CD4-positive, alpha-beta T cell (primary cell): ENCODE measurements at regions of chr9 and their contacts with region 1.

Region 1: GRCh38 chr9:10571699-10572098 is 41.1 kb downstream of the PTPRD start:
- DNase-seq: no peak
- ATAC-seq: no peak
- H3K4me3 ChIP-seq: no peak overlapping the region
- H3K4me3 Mint-ChIP-seq: no peak overlapping the region
- H3K27ac ChIP-seq: no peak overlapping the region
- H3K27ac Mint-ChIP-seq: no peak overlapping the region
- H3K4me1 ChIP-seq: no peaks in the 10 kb centered on the region
- H3K4me1 Mint-ChIP-seq: no peaks in the 10 kb centered on the region
- H3K27me3 ChIP-seq: no peaks in the 10 kb centered on the region
- H3K27me3 Mint-ChIP-seq: no peaks in the 10 kb centered on the region
- CTCF ChIP-seq: no peak

Region 2: GRCh38 chr9:8660383-8660782 is 1911.3 kb before region 1 on chr9:
- CTCF ChIA-PET with region 1: no interaction called
- POLR2A ChIA-PET with region 1: no interaction called
- intact Hi-C with region 1: no loop called
- DNase-seq: peak in 3 of 14 experiments; percentile 14 to 27 (median 15)
- ATAC-seq: no peak
- H3K4me3 ChIP-seq: no peak overlapping the region
- H3K4me3 Mint-ChIP-seq: no peak overlapping the region
- H3K27ac ChIP-seq: no peak overlapping the region
- H3K27ac Mint-ChIP-seq: no peak overlapping the region
- H3K4me1 ChIP-seq: no peaks in the 10 kb centered on the region
- H3K4me1 Mint-ChIP-seq: no peaks in the 10 kb centered on the region
- H3K27me3 ChIP-seq: no peaks in the 10 kb centered on the region
- H3K27me3 Mint-ChIP-seq: no peaks in the 10 kb centered on the region
- CTCF ChIP-seq: no peak

Region 3: DNA sequence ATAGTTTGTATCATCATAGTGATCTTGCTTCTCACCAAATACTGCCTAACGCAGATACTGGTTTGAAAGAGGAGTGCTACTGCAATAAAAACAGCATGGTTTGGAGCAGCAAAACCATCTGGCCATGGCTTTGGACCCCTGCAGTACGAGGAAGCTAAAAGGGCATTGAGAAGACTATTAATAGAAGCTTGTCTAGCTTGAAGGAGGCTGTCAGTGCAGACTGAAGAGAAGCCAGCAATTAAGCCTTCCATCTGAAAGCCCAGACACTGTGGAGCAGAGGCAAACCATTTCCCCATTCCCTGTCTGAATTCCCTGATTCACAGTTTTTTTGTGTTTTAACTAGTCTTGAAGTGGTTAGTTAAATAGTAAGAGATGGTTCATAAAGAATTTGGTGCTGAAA is 240.5 kb before region 1 on chr9:
- CTCF ChIA-PET with region 1: no interaction called
- POLR2A ChIA-PET with region 1: no interaction called
- intact Hi-C with region 1: no loop called
- DNase-seq: no peak
- ATAC-seq: no peak
- H3K4me3 ChIP-seq: no peak overlapping the region
- H3K4me3 Mint-ChIP-seq: no peak overlapping the region
- H3K27ac ChIP-seq: no peak overlapping the region
- H3K27ac Mint-ChIP-seq: no peak overlapping the region
- H3K4me1 ChIP-seq: no peaks in the 10 kb centered on the region
- H3K4me1 Mint-ChIP-seq: no peaks in the 10 kb centered on the region
- H3K27me3 ChIP-seq: no peaks in the 10 kb centered on the region
- H3K27me3 Mint-ChIP-seq: no peaks in the 10 kb centered on the region
- CTCF ChIP-seq: no peak

Region 4: GRCh38 chr9:10512144-10512543 is 59.6 kb before region 1 on chr9:
- CTCF ChIA-PET with region 1: no interaction called
- POLR2A ChIA-PET with region 1: no interaction called
- intact Hi-C with region 1: loop called in 1 of 2 experiments (anchors 10 kb)
- DNase-seq: no peak
- ATAC-seq: no peak
- H3K4me3 ChIP-seq: no peak overlapping the region
- H3K4me3 Mint-ChIP-seq: no peak overlapping the region
- H3K27ac ChIP-seq: no peak overlapping the region
- H3K27ac Mint-ChIP-seq: no peak overlapping the region
- H3K4me1 ChIP-seq: no peaks in the 10 kb centered on the region
- H3K4me1 Mint-ChIP-seq: no peaks in the 10 kb centered on the region
- H3K27me3 ChIP-seq: no peaks in the 10 kb centered on the region
- H3K27me3 Mint-ChIP-seq: no peaks in the 10 kb centered on the region
- CTCF ChIP-seq: no peak

Region 5: DNA sequence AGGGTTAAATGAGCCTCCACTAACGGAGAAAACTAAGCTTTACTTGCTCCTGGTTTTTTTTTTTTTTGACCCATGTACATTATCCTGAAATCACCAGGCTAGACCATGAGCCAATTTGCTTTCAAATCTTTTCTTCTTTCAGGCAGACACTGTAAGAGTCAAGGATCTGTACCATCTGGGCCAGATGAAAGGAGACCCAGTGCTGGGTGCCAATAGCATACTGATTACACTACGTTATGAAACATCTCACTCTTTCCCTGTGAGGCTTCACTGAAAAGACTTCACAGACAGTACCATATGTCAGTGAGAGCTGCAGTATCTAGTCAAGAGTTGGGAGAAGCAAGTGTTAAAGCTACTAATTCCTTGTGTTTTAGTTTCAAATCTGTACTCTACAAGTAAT is 202.4 kb after region 1 on chr9:
- CTCF ChIA-PET with region 1: no interaction called
- POLR2A ChIA-PET with region 1: no interaction called
- intact Hi-C with region 1: no loop called
- DNase-seq: no peak
- ATAC-seq: no peak
- H3K4me3 ChIP-seq: no peak overlapping the region
- H3K4me3 Mint-ChIP-seq: no peak overlapping the region
- H3K27ac ChIP-seq: no peak overlapping the region
- H3K27ac Mint-ChIP-seq: no peak overlapping the region
- H3K4me1 ChIP-seq: no peaks in the 10 kb centered on the region
- H3K4me1 Mint-ChIP-seq: no peaks in the 10 kb centered on the region
- H3K27me3 ChIP-seq: no peaks in the 10 kb centered on the region
- H3K27me3 Mint-ChIP-seq: no peaks in the 10 kb centered on the region
- CTCF ChIP-seq: no peak